ENCODE measurements at regions of chr13 and their contacts with region 1.

Region 1: GRCh38 chr13:93080587-93080986 is 146.0 kb upstream of the GPC6 start:
- DNase-seq: no peak
- ATAC-seq: no peak
- H3K4me3 ChIP-seq: no peak overlapping the region
- H3K27ac ChIP-seq: no peak overlapping the region
- H3K4me1 ChIP-seq: no peaks in the 10 kb centered on the region
- H3K27me3 ChIP-seq: no peaks in the 10 kb centered on the region
- CTCF ChIP-seq: no peak

Region 2: GRCh38 chr13:93364166-93364565 is 283.6 kb after region 1 on chr13:
- intact Hi-C with region 1: no loop called
- DNase-seq: no peak
- ATAC-seq: no peak
- H3K4me3 ChIP-seq: no peak overlapping the region
- H3K27ac ChIP-seq: no peak overlapping the region
- H3K4me1 ChIP-seq: no peaks in the 10 kb centered on the region
- H3K27me3 ChIP-seq: no peaks in the 10 kb centered on the region
- CTCF ChIP-seq: no peak

Region 3: DNA sequence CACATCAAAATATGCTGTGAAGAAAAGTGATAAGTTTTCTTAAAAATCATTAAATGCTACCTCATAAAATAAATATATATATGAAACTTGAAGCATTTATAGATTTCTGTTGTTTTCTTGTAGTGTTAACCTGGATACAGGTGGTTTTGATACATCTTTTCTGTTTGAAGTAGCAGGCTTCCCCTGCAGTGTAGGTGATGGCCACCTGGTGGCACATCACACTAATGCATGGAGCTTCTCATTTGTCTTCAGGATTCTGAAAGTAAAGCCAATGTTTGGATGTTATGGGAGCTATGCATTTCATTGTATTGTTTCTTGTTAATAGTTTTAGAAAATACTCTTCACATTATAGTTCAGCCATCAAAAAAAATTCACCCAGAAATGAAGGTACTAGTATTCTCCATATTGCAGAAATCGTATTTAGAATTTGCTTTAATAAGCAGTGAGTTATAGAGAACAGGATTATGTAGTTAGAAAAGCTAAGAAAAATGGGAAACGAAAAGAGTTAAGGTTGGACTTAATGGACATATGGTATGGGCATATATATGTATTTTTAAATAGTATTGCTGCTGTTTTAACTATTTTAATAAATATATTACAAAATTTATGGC is 1539.8 kb after region 1 on chr13:
- intact Hi-C with region 1: loop called in 1 of 10 experiments (anchors 10 kb)
- DNase-seq: no peak
- ATAC-seq: no peak
- H3K4me3 ChIP-seq: no peak overlapping the region
- H3K27ac ChIP-seq: no peak overlapping the region
- H3K4me1 ChIP-seq: peaks cover 0 to 8% (median 0%) of the 10 kb centered on the region in 9 donors
- H3K27me3 ChIP-seq: no peaks in the 10 kb centered on the region
- CTCF ChIP-seq: peak in 7 of 9 donors; percentile 41 to 59 (median 44)